Sigmoid colon (tissue), 7 donors: ENCODE measurements at regions of chr21 and their contacts with region 1.

Region 1: DNA sequence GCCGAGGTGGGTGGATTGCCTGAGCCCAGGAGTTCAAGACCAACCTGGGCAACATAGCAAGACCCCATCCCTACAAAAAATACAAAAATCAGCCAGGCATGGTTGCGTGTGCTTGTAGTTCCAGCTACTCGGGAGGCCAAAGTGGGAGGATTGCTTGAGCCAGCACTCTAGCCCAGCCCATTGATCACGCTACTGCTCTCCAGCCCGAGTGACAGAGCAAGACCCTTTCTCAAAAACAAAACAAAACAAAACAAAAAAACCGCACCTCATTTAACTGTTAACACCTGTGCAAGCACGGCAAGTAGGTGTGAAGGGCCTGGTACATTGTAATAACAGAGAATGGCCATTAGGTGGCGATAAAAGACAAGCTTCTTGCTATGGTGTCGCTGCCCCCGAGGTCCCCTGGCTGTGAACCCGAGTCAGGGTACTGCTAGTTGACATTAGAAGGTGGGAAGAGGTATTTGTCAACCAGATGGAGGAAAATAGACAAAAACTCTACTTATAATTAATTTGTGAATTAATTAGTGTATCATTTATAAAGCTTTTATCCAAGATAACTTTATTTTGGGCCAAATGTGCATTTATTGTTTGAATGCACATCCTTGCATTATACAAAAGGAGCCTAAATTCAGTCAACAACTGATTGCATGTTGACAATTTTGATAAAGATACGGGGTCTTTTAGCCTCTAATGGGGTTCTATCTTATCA is 66.5 kb downstream of the SH3BGR start:
- DNase-seq: no peak
- H3K4me3 ChIP-seq: no peak overlapping the region
- H3K27ac ChIP-seq: no peak overlapping the region
- H3K4me1 ChIP-seq: peaks cover 0 to 8% (median 2%) of the 10 kb centered on the region in 4 donors
- H3K27me3 ChIP-seq: no peaks in the 10 kb centered on the region
- CTCF ChIP-seq: peak; percentile 85 to 97 (median 90)
- EP300 ChIP-seq: no peak
- POLR2A ChIP-seq: no peak

Region 2: DNA sequence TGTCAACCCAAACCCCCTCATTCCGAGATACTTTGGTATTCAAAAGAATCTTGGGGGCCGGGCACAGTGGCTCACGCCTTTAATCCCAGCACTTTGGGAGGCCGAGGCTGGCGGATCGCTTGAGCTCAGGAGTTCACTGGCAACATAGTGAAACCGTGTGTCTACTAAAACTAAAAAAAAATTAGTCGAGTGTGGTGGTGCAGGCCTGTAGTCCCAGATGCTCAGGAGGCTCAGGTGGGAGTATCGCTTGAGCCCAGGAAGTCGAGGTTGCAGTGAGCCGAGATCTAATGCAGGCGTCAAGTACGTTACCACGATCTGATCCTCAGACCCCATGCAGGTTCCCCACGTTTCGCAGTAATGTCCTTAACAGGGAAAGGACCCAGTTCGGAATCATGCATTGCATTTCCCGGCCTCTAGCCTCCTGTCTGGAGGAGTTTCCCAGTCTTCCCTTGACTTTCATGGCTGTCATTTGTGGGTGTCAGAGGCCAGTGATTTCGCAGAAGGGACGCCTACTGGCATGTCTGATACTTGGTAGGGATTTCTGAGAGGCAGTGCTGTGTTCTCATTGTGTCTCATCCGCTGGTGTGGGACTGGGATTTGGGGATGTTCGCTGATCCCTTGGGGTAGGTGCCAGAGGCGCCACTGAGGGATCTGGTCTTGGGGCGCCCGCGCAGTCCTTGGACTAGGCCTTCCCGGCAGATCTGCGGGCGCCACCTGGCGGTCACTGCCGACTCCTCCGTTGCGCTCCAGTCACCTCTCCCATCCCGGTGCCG is 130.1 kb before region 1 on chr21:
- intact Hi-C with region 1: no loop called
- DNase-seq: peak; percentile 94
- H3K4me3 ChIP-seq: peak overlapping the region; percentile 16 to 51 (median 44)
- H3K27ac ChIP-seq: peak overlapping the region; percentile 72 to 84 (median 80)
- H3K4me1 ChIP-seq: peaks cover 0 to 42% (median 26%) of the 10 kb centered on the region in 4 donors
- H3K27me3 ChIP-seq: no peaks in the 10 kb centered on the region
- CTCF ChIP-seq: peak; percentile 74 to 97 (median 90)
- EP300 ChIP-seq: no peak
- POLR2A ChIP-seq: no peak

Region 3: DNA sequence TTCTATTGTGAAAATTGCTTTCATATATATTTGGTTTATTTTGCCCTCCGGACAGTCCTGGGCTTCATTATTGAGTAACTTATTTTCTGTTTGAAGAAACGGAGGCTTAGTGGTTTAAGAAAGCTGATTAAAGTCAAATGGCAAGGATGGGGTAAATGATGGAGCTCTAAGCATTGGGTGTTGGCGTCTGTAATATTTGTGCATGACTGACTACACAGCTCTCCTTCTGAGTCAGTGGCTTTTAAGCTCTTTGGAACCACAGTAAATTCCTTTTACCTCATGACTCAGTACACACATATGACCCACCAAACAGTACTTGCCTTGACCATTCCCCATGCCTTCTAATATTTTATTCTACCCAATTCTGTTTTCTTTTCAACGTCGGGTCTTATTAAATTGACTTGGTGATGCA is 115.5 kb after region 1 on chr21:
- intact Hi-C with region 1: loop called (anchors 10 kb)
- DNase-seq: no peak
- H3K4me3 ChIP-seq: no peak overlapping the region
- H3K27ac ChIP-seq: no peak overlapping the region
- H3K4me1 ChIP-seq: peaks cover 0 to 11% (median 4%) of the 10 kb centered on the region in 4 donors
- H3K27me3 ChIP-seq: no peaks in the 10 kb centered on the region
- CTCF ChIP-seq: no peak
- EP300 ChIP-seq: no peak
- POLR2A ChIP-seq: no peak

Region 4: DNA sequence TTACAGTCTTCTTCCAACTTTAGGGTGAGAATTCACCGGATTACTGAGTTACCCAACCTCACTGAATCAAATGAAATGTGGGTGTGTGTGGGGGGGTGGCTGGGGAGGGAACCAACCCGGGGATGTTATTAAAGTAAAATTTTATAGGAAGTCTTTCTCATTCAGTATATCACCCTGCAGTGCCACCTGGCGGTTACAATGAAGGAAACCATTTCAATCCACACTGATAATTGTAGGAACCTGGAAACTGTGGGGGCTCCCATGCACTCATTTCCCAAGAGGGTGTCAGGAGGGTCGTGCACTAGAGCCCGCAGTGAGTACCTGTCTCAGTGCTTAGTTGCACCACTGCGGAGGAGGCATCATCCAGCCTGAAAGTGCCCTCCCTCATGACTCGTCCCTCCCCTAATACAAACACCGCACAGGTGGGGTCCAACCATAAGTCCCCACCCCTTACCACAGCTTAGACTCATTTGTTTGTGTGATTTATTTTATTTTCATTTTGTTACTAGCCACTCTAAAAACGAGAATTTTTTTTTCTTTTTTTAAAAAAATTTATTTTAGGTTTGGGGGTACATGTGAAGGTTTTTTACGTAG is 197.6 kb after region 1 on chr21:
- intact Hi-C with region 1: loop called (anchors 1 kb)
- DNase-seq: peak; percentile 68
- H3K4me3 ChIP-seq: no peak overlapping the region
- H3K27ac ChIP-seq: no peak overlapping the region
- H3K4me1 ChIP-seq: peaks cover 0 to 7% (median 0%) of the 10 kb centered on the region in 4 donors
- H3K27me3 ChIP-seq: no peaks in the 10 kb centered on the region
- CTCF ChIP-seq: peak; percentile 37 to 76 (median 50)
- EP300 ChIP-seq: no peak
- POLR2A ChIP-seq: no peak